PC-9 (cell line): ENCODE measurements at regions of chr22 and their contacts with region 1.

Region 1: GRCh38 chr22:23893943-23894709 is at the start of gene MIF:
- DNase-seq: peak; percentile 81 to 96
- H3K4me3 ChIP-seq: peak within 1 kb of the TSS; percentile 80
- H3K27ac ChIP-seq: peak within 1 kb of the TSS; percentile 79
- H3K4me1 ChIP-seq: peaks cover 19% of the 10 kb centered on the region
- H3K27me3 ChIP-seq: no peaks in the 10 kb centered on the region
- CTCF ChIP-seq: peak; percentile 84
- total RNA-seq, gene MIF: 531 and 695 TPM in 2 replicates

Region 2: GRCh38 chr22:23800297-23801237 is 93.6 kb before region 1 on chr22:
- CTCF ChIA-PET with region 1: no interaction called
- POLR2A ChIA-PET with region 1: no interaction called
- intact Hi-C with region 1: no loop called
- DNase-seq: no peak
- H3K4me3 ChIP-seq: no peak overlapping the region
- H3K27ac ChIP-seq: no peak overlapping the region
- H3K4me1 ChIP-seq: no peaks in the 10 kb centered on the region
- H3K27me3 ChIP-seq: no peaks in the 10 kb centered on the region
- CTCF ChIP-seq: no peak

Region 3: GRCh38 chr22:23826465-23827199 is 67.5 kb before region 1 on chr22:
- CTCF ChIA-PET with region 1: no interaction called
- POLR2A ChIA-PET with region 1: no interaction called
- intact Hi-C with region 1: no loop called
- DNase-seq: no peak
- H3K4me3 ChIP-seq: no peak overlapping the region
- H3K27ac ChIP-seq: no peak overlapping the region
- H3K4me1 ChIP-seq: no peaks in the 10 kb centered on the region
- H3K27me3 ChIP-seq: no peaks in the 10 kb centered on the region
- CTCF ChIP-seq: no peak

Region 4: DNA sequence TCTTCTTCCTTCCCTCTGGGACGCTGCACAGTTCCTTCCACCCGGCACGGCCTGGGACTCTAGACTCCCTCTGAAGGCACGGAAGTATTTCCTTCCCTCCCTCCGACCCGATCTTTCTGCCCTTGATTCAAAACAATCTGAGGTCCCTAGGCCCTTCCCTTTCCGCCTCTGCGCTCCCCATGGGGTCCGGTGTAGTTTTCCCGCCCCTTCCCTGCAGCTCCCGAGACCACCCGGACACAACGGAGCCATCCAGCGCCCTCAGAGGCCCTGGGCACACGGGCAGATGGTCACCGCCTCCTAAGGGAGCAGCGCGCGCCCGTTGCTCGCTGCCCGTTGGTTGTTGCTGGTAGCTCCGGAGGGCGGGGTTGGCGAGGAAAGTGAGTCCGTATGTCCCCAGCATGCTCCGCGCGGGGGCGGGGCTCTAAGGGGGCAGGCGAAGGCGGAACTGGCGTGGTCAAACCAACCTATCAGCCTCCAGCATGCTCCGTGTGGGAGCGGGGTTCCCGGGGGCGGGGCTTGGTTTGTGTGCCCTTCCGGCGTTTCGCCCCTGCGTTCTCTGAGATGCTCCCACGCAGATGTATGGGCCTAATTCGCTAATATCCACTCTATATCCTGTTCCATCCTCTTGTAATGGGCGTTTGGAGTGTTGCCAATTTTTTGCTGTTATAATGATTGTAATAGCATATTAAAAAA is 19.7 kb after region 1 on chr22:
- CTCF ChIA-PET with region 1: no interaction called
- POLR2A ChIA-PET with region 1: interaction called, 17 read pairs
- intact Hi-C with region 1: no loop called
- DNase-seq: peak; percentile 97
- H3K4me3 ChIP-seq: peak overlapping the region; percentile 81
- H3K27ac ChIP-seq: peak overlapping the region; percentile 69
- H3K4me1 ChIP-seq: peaks cover 12% of the 10 kb centered on the region; the same call in 1 of the 2 replicates
- H3K27me3 ChIP-seq: no peaks in the 10 kb centered on the region
- CTCF ChIP-seq: no peak

Region 5: GRCh38 chr22:24011735-24012068 is 117.6 kb after region 1 on chr22:
- CTCF ChIA-PET with region 1: interaction called, 14 read pairs
- POLR2A ChIA-PET with region 1: no interaction called
- intact Hi-C with region 1: no loop called
- DNase-seq: peak in 1 of 2 experiments; percentile 39
- H3K4me3 ChIP-seq: peak overlapping the region; percentile 80
- H3K27ac ChIP-seq: no peak overlapping the region
- H3K4me1 ChIP-seq: peaks cover 13% of the 10 kb centered on the region
- H3K27me3 ChIP-seq: no peaks in the 10 kb centered on the region
- CTCF ChIP-seq: no peak

Region 6: DNA sequence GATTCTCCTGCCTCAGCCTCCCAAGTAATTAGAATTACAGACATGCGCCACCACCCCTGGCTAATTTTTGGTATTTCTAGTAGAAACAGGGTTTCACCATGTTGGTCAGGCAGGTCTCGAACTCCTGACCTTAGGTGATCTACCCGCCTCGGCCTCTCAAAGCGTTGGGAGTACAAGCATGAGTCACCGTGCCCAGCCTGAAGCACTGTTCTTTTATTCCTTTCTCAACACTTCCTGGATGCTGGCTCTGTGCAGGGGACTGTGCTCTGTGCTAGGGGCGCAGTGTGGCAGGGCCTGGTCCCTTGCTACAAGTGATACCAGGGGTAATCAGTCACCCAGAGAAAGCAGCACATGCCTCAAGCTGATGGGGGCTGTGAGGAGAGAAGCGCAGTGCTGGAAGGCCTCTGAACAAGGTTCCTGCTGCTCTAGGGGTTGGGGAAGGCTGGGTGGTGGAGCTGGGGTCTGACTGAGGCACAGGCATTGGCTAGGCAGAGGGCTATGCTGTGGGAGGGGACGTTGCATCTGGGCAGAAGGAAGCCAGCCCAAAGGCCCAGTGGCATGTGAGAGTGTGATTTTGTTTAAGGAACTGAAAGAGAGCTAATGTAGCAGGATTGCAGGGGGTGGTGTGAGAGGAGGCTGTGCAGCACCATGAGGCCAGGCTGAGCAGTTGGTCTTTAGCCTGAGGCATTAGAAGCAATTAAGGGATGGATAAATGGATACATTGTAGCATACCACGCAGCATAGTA is 159.5 kb after region 1 on chr22:
- CTCF ChIA-PET with region 1: no interaction called
- POLR2A ChIA-PET with region 1: no interaction called
- intact Hi-C with region 1: no loop called
- DNase-seq: no peak
- H3K4me3 ChIP-seq: no peak overlapping the region
- H3K27ac ChIP-seq: no peak overlapping the region
- H3K4me1 ChIP-seq: no peaks in the 10 kb centered on the region
- H3K27me3 ChIP-seq: no peaks in the 10 kb centered on the region
- CTCF ChIP-seq: no peak